Right ventricle myocardium inferior (tissue), 1 donor: ENCODE measurements at regions of chr6 and their contacts with region 1.

Region 1: GRCh38 chr6:100116411-100117194 is 122.6 kb upstream of the MCHR2 start:
- DNase-seq: no peak
- ATAC-seq: no peak

Region 2: DNA sequence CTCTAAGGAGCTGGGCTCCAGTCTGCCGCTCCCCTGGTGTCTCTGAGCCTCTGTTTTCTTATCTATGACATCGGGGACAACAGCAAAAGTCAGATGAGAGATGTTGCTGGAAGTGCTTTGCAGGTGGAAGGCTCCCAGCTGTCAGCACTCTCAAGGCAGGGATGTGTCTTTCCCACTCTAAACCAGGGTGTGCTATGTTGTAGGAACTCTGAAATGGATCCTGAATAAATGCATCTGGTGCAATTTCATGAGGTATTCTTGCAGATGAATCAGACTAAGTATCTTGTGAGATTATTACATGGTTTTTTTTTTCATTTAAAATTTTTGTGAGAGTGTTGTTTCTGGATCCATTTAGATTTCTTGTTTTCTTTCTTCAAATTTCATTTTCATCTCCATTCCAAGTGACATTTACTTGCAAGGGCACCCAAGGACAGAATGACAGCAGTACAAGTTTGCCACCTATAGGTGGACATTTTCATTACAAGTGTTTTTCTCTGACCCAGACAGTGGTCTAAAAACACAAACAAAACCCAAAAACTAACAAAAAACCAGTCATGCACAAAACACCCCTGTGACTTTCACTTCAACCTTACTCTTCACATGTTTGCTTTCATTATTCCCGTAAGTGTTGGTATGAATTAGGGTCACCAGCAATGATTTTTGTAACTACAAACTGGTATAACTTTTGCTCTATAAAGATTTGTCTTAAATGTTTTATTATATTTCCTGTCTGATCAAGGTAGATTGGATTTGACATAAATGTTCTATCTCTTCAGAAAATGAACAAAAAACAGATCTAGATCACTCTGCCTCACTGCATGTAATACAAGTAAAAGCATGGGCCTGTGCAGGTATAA is 362.8 kb after region 1 on chr6:
- intact Hi-C with region 1: loop called (anchors 1 kb)
- DNase-seq: no peak
- ATAC-seq: no peak

Region 3: DNA sequence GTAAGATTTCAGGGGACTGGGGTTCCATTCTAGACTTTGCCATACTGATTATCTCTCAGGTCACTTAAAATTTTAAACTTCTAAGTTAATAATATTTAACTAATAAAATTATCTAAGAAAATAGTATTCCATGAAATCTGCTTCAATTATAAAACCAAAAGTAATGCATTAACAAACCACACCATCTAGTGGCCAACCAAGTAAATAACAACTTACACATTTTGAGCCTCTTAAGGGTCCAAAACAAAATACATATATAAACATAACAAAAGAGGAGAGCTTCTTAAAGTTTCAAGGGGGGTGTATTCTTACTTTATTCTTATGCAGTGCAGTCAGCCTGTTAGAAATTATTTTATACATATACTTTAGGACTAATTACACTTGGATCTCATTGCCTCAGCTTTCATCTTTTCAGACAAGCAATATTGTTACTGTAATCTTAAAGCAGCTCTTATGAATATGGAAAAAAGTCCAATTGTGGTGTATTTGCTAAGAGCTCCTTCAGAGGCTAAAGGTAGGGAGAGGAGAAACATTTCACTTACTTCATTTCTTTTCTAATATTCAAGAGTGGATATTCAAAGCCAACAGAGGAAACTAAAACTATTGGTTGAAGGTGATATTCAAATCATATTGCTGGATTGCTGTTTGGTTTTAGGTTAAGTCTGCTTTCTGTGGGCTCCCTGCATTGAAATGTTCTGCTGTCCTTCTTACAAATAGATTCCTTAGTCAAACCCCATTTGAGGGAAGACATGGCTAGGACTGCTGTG is 547.9 kb after region 1 on chr6:
- intact Hi-C with region 1: loop called (anchors 5 kb)
- DNase-seq: no peak
- ATAC-seq: no peak